ENCODE measurements at regions of chr10 and their contacts with region 1.

Region 1: DNA sequence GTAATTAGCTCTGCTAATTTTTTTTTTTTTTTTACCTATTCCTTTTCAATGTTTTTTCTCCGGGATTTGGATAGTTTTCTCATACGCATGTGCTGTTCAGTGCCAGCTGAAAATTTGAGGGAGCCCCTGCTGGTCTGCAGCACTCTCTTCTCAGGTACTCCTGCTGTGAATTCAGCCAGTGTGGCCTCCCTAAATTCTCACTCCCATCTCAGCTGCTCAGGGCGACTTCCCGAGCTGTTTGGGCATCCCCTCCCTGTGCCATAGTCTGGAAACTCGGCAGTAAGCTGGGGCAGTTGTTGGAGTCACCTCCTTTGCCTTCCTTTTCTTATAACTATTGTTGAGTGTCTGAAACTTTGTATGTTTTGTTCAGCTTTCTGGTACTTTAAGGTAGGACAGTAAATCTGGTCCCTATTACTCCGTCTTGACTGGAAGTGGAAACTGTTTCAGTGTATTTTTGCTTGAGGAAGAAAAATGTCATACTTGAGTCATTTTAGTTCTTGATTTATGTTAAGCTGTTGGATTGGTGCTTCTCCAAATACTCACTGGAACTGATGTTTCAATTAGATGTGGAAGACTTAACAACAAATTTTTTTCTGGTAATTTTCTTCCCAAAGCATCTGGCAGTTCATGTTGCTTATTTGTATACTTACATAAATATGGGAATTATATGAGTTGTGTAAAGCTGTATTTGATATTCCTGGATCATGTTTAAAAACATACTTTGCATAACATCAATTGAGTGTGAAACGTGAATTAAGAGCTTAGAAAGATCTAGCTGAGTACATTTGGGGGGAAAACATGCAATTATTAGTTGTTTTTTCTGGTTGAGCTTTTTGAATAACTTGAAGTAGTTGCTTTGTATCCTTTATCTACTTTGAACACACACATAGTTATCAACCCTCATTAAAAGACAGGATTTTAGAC is 33.7 kb downstream of the MINPP1 start:
- DNase-seq: no peak
- ATAC-seq: no peak
- H3K4me3 Mint-ChIP-seq: no peak overlapping the region
- H3K27ac Mint-ChIP-seq: no peak overlapping the region
- H3K4me1 Mint-ChIP-seq: peaks cover 22% of the 10 kb centered on the region
- H3K27me3 Mint-ChIP-seq: no peaks in the 10 kb centered on the region

Region 2: DNA sequence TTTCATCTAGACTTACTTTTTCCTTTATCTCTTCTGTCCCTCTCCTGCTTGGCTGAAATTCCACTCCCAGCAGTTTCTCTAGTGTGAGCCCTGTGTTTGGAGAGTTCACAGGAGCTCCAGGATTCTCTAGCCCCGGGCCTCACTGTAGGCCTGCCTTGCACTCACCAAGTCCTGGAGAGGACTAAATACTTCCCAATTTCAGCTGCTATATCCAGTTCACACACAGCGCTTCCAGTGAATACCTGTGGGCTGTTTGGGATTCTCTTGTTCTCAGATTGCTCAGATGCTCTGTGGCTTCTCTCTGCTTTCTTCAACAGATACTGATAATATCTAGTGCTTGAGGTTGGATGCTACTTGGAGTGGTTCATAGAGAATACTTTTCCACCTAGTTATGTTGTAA is 12.4 kb after region 1 on chr10:
- CTCF ChIA-PET with region 1: interaction called, 6 read pairs
- POLR2A ChIA-PET with region 1: no interaction called
- intact Hi-C with region 1: loop called in 1 of 2 experiments (anchors 1 kb)
- DNase-seq: no peak
- ATAC-seq: no peak
- H3K4me3 Mint-ChIP-seq: no peak overlapping the region
- H3K27ac Mint-ChIP-seq: no peak overlapping the region
- H3K4me1 Mint-ChIP-seq: peaks cover 18% of the 10 kb centered on the region
- H3K27me3 Mint-ChIP-seq: no peaks in the 10 kb centered on the region

Region 3: DNA sequence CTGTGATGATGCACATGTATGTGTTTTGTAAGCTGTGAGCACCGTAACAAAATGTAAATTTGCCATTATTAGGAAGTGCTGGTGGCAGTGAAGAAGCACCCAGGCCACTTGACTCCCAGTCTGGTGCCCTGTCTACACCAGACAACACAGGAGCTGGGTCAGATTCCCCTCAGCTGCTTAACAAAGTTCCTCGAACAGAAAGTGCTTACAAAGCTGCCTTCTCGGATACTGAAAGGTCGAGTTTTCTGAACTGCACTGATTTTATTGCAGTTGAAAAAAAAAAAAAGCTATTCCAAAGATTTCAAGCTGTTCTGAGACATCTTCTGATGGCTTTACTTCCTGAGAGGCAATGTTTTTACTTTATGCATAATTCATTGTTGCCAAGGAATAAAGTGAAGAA is 208.6 kb after region 1 on chr10:
- CTCF ChIA-PET with region 1: no interaction called
- POLR2A ChIA-PET with region 1: no interaction called
- intact Hi-C with region 1: loop called in 1 of 2 experiments (anchors 5 kb)
- DNase-seq: no peak
- ATAC-seq: no peak
- H3K4me3 Mint-ChIP-seq: no peak overlapping the region
- H3K27ac Mint-ChIP-seq: no peak overlapping the region
- H3K4me1 Mint-ChIP-seq: peaks cover 19% of the 10 kb centered on the region
- H3K27me3 Mint-ChIP-seq: no peaks in the 10 kb centered on the region

Region 4: DNA sequence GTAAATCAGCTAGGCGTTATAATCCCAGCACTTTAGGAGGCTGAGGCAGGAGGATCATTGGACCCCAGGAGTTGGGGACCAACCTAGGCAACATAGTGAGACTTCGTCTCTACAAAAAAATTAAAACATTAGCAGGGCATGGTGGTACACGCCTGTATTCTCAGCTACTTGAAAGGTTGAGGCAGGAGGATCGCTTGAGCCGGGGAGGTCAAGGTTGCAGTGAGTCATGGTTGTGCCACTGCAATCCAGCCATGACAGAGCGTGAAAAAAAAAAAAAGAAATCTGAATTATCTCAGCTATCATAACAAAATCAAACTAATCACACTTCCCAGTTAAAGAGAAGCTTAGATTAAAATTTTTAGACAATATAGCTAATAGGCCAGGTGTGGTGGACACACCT is 244.4 kb after region 1 on chr10:
- CTCF ChIA-PET with region 1: no interaction called
- POLR2A ChIA-PET with region 1: no interaction called
- intact Hi-C with region 1: no loop called
- DNase-seq: no peak
- ATAC-seq: no peak
- H3K4me3 Mint-ChIP-seq: no peak overlapping the region
- H3K27ac Mint-ChIP-seq: peak overlapping the region; percentile 23
- H3K4me1 Mint-ChIP-seq: peaks cover 2% of the 10 kb centered on the region
- H3K27me3 Mint-ChIP-seq: no peaks in the 10 kb centered on the region

Measured in activated CD4-positive, alpha-beta T cell treated with anti-CD3 and anti-CD28 coated beads for 36 hours (primary cell).